ENCODE measurements at regions of chr5 and their contacts with region 1.

Region 1: GRCh38 chr5:135517631-135518030 is 18.1 kb downstream of the NEUROG1 start:
- DNase-seq: no peak
- H3K4me3 ChIP-seq: no peak overlapping the region
- H3K27ac ChIP-seq: no peak overlapping the region
- H3K4me1 ChIP-seq: no peaks in the 10 kb centered on the region
- H3K27me3 ChIP-seq: no peaks in the 10 kb centered on the region
- CTCF ChIP-seq: no peak

Region 2: GRCh38 chr5:135371622-135372251 is 145.9 kb before region 1 on chr5:
- CTCF ChIA-PET with region 1: no interaction called
- dilution Hi-C with region 1: no loop called
- in situ Hi-C with region 1: no loop called
- intact Hi-C with region 1: no loop called
- DNase-seq: no peak
- H3K4me3 ChIP-seq: no peak overlapping the region
- H3K27ac ChIP-seq: no peak overlapping the region
- H3K4me1 ChIP-seq: peaks cover under 1% of the 10 kb centered on the region
- H3K27me3 ChIP-seq: no peaks in the 10 kb centered on the region
- CTCF ChIP-seq: no peak

Region 3: DNA sequence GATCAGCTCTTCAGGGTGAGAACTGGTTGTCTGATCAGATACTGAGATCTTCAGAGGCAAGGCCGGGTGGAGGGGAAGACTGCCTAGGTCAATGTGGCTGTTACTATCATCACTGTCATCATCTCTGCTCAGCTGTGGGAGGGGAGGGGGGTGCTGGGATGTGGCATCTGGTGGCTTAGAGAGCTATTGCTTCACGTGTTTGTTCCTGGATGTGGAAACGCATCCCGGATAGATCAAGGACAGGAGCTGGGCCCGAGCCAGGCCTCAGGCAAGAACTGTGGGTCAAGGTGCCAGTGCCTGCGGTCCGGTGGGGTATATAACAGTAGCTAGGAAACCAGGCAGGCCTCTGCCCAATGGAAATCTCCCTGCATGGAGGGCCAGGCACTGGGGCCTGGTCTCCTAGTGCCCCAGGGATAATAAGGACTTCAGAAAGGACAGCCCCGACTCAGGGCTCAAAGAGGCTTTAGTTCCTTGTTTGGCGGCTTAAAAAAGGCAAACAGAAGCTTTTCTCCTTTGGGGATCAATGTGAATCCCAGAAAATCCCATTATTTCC is 35.2 kb before region 1 on chr5:
- CTCF ChIA-PET with region 1: no interaction called
- dilution Hi-C with region 1: loop called (anchors 5 kb)
- in situ Hi-C with region 1: no loop called
- intact Hi-C with region 1: no loop called
- DNase-seq: no peak
- H3K4me3 ChIP-seq: no peak overlapping the region
- H3K27ac ChIP-seq: no peak overlapping the region
- H3K4me1 ChIP-seq: no peaks in the 10 kb centered on the region
- H3K27me3 ChIP-seq: no peaks in the 10 kb centered on the region
- CTCF ChIP-seq: no peak

Region 4: DNA sequence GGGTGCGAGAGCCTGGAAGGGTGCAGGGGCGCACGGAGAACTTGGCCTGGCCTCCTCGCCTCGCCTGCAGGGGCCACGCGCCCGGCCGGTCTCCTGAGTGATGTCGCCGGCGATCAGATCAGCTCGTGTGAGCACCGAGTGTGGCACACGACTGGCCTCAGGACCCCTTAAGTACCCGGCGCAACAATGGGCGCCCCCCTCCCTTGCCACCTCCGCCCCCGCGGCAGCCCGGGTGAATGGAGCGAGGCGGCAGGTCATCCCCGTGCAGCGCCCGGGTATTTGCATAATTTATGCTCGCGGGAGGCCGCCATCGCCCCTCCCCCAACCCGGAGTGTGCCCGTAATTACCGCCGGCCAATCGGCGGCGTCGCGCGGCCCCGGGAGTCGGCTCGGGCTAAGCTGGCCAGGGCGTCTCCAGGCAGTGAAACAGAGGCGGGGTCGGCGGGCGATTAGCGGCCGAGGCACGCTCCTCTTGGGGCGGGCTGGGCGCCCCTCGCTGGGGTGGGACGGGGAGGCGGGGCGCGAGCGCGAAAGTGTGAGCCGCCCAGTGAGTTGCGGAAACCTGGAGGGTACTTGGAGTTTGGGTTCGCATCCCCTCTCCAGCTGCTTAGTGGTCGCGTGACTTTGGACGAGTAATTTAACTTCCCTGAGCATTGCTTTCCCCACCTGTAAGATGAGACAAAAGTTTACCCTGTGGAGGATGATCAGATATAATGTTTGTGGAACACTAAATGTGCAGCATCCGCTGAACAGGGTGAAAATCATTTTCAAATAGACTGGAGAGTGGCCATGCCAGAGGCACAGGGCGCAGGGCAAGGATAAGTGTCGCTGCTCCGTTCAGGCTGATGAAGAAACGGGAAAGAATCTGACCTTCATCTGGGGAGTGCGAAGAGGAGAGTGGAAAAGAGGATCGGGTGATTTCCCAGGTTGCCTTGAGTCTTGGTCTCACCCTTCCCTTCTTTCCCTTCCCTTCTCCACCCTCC is 18.5 kb after region 1 on chr5 and contains the start of gene NEUROG1:
- CTCF ChIA-PET with region 1: no interaction called
- dilution Hi-C with region 1: no loop called
- in situ Hi-C with region 1: no loop called
- intact Hi-C with region 1: no loop called
- DNase-seq: no peak
- H3K4me3 ChIP-seq: peak within 1 kb of the TSS; percentile 9 to 23 (median 22)
- H3K27ac ChIP-seq: no peak within 1 kb of the TSS
- H3K4me1 ChIP-seq: peaks cover 10% of the 10 kb centered on the region
- H3K27me3 ChIP-seq: peaks cover 24% of the 10 kb centered on the region
- CTCF ChIP-seq: no peak
- total RNA-seq, gene NEUROG1: not detected

Region 5: DNA sequence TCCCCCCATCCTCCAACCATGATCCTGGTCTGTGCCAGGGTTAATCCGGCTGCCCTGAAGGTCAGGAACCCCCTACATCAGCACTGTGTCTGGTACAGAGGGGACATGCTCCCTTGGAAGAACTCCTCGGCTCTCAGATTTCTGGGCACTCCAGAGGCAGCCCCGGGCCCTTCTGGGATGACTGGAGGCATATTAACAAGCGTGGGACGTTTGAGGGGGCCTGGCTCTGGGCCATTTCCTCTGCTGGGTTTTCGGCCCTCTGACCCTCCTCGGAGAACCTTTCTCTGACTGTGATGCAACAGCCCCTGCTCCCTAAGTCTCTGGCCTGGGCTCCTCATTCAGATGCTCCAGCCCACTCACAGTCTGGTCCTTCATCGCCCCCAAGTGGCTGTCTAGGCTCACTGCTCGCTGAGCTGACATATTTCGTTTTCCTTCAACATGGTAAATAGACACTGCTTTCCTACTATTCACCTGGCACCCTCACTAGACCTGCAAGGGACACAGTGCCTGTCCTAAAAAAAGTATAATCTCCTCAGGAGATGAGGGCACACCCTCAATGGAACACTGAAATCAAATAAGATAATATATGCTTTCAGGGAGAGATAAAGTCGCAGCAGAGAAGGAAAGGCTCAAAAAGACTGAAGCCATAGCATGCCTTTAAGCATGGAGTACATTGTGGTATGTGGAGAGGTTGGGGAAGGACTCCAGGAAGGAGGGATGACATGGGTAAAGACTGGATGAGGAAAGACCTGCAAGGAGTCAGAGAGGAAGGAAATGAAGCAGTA is 1252.5 kb after region 1 on chr5:
- CTCF ChIA-PET with region 1: no interaction called
- dilution Hi-C with region 1: no loop called
- in situ Hi-C with region 1: no loop called
- intact Hi-C with region 1: no loop called
- DNase-seq: peak; percentile 45
- H3K4me3 ChIP-seq: no peak overlapping the region
- H3K27ac ChIP-seq: no peak overlapping the region
- H3K4me1 ChIP-seq: no peaks in the 10 kb centered on the region
- H3K27me3 ChIP-seq: peaks cover 2% of the 10 kb centered on the region
- CTCF ChIP-seq: peak; percentile 93 to 95

Measured in mammary epithelial cell (primary cell).